ENCODE measurements at regions of chr7 and their contacts with region 1.

Region 1: DNA sequence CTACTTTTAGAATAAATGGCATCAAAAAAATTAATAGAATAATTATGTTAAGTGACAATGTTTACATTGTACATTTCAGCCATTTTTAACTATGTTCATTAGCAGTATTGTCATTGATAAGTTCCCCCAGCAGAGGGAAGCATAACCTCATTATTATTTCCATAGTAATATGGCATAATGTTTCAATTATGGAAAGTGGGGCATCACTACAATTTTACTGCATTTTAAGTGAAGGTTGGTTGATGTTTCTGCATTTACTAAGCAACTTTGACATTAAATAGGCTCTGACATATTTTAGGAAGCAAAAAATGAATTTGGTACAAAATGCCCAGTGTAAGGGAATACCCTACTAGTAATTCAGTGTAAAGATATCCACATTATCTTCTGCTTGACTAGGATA is 218.3 kb downstream of the SEMA3A start:
- DNase-seq: peak; percentile 44
- ATAC-seq: peak; percentile 60
- H3K4me3 ChIP-seq: no peak overlapping the region
- H3K27ac ChIP-seq: no peak overlapping the region
- H3K4me1 ChIP-seq: no peaks in the 10 kb centered on the region
- H3K27me3 ChIP-seq: no peaks in the 10 kb centered on the region
- CTCF ChIP-seq: peak; percentile 68
- POLR2A ChIP-seq: no peak
- RAD21 ChIP-seq: peak; percentile 81

Region 2: GRCh38 chr7:83835424-83835823 is 140.9 kb before region 1 on chr7:
- CTCF ChIA-PET with region 1: no interaction called
- POLR2A ChIA-PET with region 1: no interaction called
- dilution Hi-C with region 1: no loop called
- in situ Hi-C with region 1: no loop called
- intact Hi-C with region 1: no loop called
- DNase-seq: no peak
- ATAC-seq: no peak
- H3K4me3 ChIP-seq: no peak overlapping the region
- H3K27ac ChIP-seq: no peak overlapping the region
- H3K4me1 ChIP-seq: no peaks in the 10 kb centered on the region
- H3K27me3 ChIP-seq: no peaks in the 10 kb centered on the region
- CTCF ChIP-seq: no peak
- POLR2A ChIP-seq: no peak
- RAD21 ChIP-seq: no peak

Region 3: GRCh38 chr7:84188786-84189405 is 212.6 kb after region 1 on chr7:
- CTCF ChIA-PET with region 1: no interaction called
- POLR2A ChIA-PET with region 1: no interaction called
- dilution Hi-C with region 1: no loop called
- in situ Hi-C with region 1: loop called (anchors 10 kb)
- intact Hi-C with region 1: loop called (anchors 1 kb)
- DNase-seq: peak; percentile 32
- ATAC-seq: no peak
- H3K4me3 ChIP-seq: no peak overlapping the region
- H3K27ac ChIP-seq: peak overlapping the region; percentile 11; the same call in 1 of the 2 replicates
- H3K4me1 ChIP-seq: peaks cover 9% of the 10 kb centered on the region
- H3K27me3 ChIP-seq: no peaks in the 10 kb centered on the region
- CTCF ChIP-seq: peak; percentile 53
- POLR2A ChIP-seq: no peak
- RAD21 ChIP-seq: peak; percentile 47

Region 4: GRCh38 chr7:84455788-84456187 is 479.5 kb after region 1 on chr7:
- CTCF ChIA-PET with region 1: no interaction called
- POLR2A ChIA-PET with region 1: no interaction called
- dilution Hi-C with region 1: no loop called
- in situ Hi-C with region 1: no loop called
- intact Hi-C with region 1: loop called (anchors 5 kb)
- DNase-seq: peak; percentile 30
- ATAC-seq: no peak
- H3K4me3 ChIP-seq: no peak overlapping the region
- H3K27ac ChIP-seq: no peak overlapping the region
- H3K4me1 ChIP-seq: no peaks in the 10 kb centered on the region
- H3K27me3 ChIP-seq: no peaks in the 10 kb centered on the region
- CTCF ChIP-seq: no peak
- POLR2A ChIP-seq: no peak
- RAD21 ChIP-seq: no peak

Region 5: DNA sequence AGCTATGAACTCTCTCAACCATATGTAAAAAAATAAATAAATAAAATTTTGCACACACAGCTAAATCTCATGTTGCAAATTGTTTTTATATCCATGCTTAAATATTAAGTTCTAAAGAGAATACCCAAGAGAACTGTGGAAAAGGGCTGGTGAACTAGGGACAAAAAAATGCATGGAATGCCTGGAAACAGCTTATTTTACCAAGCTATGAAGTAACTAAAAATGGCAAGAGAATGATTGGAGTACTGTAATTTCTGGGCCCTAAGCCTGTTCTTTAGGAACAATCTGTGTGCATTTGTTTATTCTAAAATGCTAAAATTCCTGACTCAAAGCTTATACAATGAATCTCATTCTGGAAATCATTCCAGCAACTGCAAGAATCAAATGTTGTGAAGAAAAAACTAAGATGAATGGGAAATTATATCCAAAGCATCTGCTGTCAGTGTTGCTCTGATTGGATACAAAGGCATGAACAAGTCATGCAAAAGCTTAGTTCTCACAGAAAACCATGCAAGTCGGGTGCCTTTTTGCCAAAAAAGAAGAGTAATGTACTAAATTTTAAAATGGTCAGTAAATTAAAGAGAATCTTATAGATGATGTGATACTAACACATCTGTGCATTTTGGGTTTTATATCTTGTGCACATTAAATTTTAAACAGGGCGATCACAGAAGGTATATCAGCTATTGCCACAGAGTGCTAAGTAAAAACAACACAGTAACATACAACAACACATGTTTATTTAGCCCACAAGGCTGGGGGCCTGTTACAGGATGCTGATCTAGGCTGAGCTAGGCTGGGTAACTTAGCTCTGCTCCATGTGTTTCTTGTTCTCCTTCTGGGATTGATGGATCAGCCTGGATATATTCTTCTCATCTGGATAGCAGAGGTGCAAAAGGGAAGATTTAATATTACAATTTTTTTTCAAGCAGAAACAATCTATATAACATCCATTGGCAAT is 671.8 kb after region 1 on chr7:
- CTCF ChIA-PET with region 1: no interaction called
- POLR2A ChIA-PET with region 1: no interaction called
- dilution Hi-C with region 1: no loop called
- in situ Hi-C with region 1: no loop called
- intact Hi-C with region 1: loop called (anchors 5 kb)
- DNase-seq: peak; percentile 94
- ATAC-seq: peak; percentile 96
- H3K4me3 ChIP-seq: no peak overlapping the region
- H3K27ac ChIP-seq: peak overlapping the region; percentile 69
- H3K4me1 ChIP-seq: peaks cover 8% of the 10 kb centered on the region
- H3K27me3 ChIP-seq: no peaks in the 10 kb centered on the region
- CTCF ChIP-seq: no peak
- POLR2A ChIP-seq: no peak
- RAD21 ChIP-seq: no peak